Mammary epithelial cell (primary cell): ENCODE measurements at regions of chr10 and their contacts with region 1.

Region 1: DNA sequence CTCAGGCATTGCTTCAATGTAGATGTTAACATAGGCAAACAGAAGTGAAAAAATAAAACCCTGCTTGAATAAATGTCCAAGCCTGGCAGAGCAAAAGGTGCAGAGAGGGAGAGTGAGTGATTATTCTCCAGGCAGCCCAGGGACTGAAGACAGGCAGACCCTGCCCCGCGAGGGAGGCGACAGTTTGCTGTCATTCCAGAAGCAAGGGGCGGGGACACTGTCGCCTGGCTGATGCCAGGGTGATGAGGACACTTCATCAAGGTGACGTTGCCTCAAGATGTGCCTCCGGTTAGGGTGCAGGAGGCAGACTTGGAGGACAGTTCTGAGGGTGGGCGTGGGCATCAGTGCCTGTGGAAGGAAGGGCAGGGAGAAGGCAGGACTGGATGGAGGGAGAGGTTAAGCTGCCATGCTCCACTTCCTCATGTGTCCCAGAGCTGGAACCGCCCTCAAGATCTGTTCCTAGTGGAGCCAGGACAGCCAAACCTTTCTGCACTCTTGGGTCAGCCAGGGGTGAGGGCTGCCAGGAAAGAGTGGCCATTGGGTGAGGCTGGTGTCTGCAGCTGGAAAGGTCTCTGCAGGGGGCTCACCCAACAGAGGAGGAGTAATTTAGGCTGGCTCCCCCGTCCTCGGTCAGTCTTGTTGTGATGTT is 560.5 kb upstream of the MKI67 start:
- DNase-seq: no peak
- H3K4me3 ChIP-seq: no peak overlapping the region
- H3K27ac ChIP-seq: no peak overlapping the region
- H3K4me1 ChIP-seq: no peaks in the 10 kb centered on the region
- H3K27me3 ChIP-seq: no peaks in the 10 kb centered on the region
- CTCF ChIP-seq: no peak

Region 2: DNA sequence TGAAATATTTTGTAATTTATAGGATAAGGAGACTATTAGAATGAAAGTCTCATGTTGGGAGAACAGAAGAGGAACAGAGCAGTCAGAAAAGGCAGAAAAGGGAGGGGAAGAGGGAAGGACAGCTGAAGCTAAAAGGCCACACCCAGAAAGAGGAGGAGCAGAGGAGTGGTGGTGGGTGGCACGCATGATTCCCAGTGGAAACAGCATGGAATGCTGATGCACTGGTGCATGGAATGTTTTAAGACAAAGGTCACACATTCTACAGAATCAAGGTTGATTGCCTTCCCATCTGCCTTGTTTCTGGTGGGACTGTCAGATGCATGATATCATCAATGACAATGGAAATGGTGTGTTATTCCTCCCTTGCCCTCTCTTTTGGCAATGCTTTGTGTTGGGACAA is 275.1 kb before region 1 on chr10:
- CTCF ChIA-PET with region 1: no interaction called
- dilution Hi-C with region 1: no loop called
- in situ Hi-C with region 1: no loop called
- intact Hi-C with region 1: no loop called
- DNase-seq: no peak
- H3K4me3 ChIP-seq: no peak overlapping the region
- H3K27ac ChIP-seq: no peak overlapping the region
- H3K4me1 ChIP-seq: no peaks in the 10 kb centered on the region
- H3K27me3 ChIP-seq: no peaks in the 10 kb centered on the region
- CTCF ChIP-seq: no peak

Region 3: GRCh38 chr10:128766915-128767314 is 80.2 kb after region 1 on chr10:
- CTCF ChIA-PET with region 1: no interaction called
- dilution Hi-C with region 1: loop called (anchors 5 kb)
- in situ Hi-C with region 1: no loop called
- intact Hi-C with region 1: no loop called
- DNase-seq: no peak
- H3K4me3 ChIP-seq: no peak overlapping the region
- H3K27ac ChIP-seq: no peak overlapping the region
- H3K4me1 ChIP-seq: no peaks in the 10 kb centered on the region
- H3K27me3 ChIP-seq: no peaks in the 10 kb centered on the region
- CTCF ChIP-seq: no peak